Ascending aorta (tissue), 2 donors: ENCODE measurements at regions of chr15 and their contacts with region 1.

Region 1: DNA sequence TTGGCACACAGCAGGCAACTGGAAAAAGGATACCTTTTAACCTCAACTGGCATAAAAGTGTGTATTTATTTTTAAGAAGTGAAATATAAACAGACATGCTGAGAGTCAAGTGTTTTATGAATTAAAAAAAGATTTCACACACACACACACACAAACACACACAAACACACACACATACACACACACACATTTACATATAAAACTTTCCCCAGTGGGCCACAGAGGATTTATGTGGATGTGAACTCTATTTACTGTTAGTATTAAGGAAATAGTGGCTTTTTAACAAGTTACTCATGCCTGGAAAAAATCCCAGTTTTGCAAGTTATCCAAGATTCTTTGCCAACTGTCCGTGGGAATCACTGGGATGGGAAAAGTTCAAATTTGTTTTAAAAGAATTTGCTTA is 725.9 kb upstream of the NR2F2 start:
- DNase-seq: peak in 1 of 2 donors; percentile 64
- H3K4me3 ChIP-seq: no peak overlapping the region
- H3K27ac ChIP-seq: peak overlapping the region in 1 of 2 donors; percentile 46
- H3K4me1 ChIP-seq: peaks cover 0 to 18% of the 10 kb centered on the region in 2 donors
- H3K27me3 ChIP-seq: no peaks in the 10 kb centered on the region
- CTCF ChIP-seq: no peak

Region 2: GRCh38 chr15:95439922-95440376 is 164.7 kb before region 1 on chr15:
- intact Hi-C with region 1: loop called (anchors 10 kb)
- DNase-seq: no peak
- H3K4me3 ChIP-seq: no peak overlapping the region
- H3K27ac ChIP-seq: no peak overlapping the region
- H3K4me1 ChIP-seq: no peaks in the 10 kb centered on the region
- H3K27me3 ChIP-seq: no peaks in the 10 kb centered on the region
- CTCF ChIP-seq: no peak

Region 3: GRCh38 chr15:95839367-95839782 is 234.7 kb after region 1 on chr15:
- intact Hi-C with region 1: loop called (anchors 10 kb)
- DNase-seq: no peak
- H3K4me3 ChIP-seq: no peak overlapping the region
- H3K27ac ChIP-seq: peak overlapping the region; percentile 51 to 94
- H3K4me1 ChIP-seq: peaks cover 0 to 4% of the 10 kb centered on the region in 2 donors
- H3K27me3 ChIP-seq: no peaks in the 10 kb centered on the region
- CTCF ChIP-seq: no peak